Aorta (tissue), 5 donors: ENCODE measurements at regions of chr6 and their contacts with region 1.

Region 1: GRCh38 chr6:150813319-150813992 is 52.0 kb upstream of the MTHFD1L start:
- DNase-seq: no peak
- ATAC-seq: no peak
- H3K4me3 ChIP-seq: no peak overlapping the region
- H3K27ac ChIP-seq: no peak overlapping the region
- H3K4me1 ChIP-seq: no peaks in the 10 kb centered on the region
- H3K27me3 ChIP-seq: no peaks in the 10 kb centered on the region

Region 2: GRCh38 chr6:150079604-150080003 is 733.9 kb before region 1 on chr6:
- intact Hi-C with region 1: loop called (anchors 5 to 10 kb)
- DNase-seq: no peak
- ATAC-seq: no peak
- H3K4me3 ChIP-seq: no peak overlapping the region
- H3K27ac ChIP-seq: no peak overlapping the region
- H3K4me1 ChIP-seq: no peaks in the 10 kb centered on the region
- H3K27me3 ChIP-seq: peaks cover 0 to 1% of the 10 kb centered on the region in 2 donors

Region 3: GRCh38 chr6:150417899-150418826 is 395.3 kb before region 1 on chr6:
- intact Hi-C with region 1: loop called (anchors 1 to 2 kb)
- DNase-seq: no peak
- ATAC-seq: peak; percentile 90
- H3K4me3 ChIP-seq: peak overlapping the region; percentile 51 to 60
- H3K27ac ChIP-seq: no peak overlapping the region
- H3K4me1 ChIP-seq: no peaks in the 10 kb centered on the region
- H3K27me3 ChIP-seq: no peaks in the 10 kb centered on the region

Region 4: DNA sequence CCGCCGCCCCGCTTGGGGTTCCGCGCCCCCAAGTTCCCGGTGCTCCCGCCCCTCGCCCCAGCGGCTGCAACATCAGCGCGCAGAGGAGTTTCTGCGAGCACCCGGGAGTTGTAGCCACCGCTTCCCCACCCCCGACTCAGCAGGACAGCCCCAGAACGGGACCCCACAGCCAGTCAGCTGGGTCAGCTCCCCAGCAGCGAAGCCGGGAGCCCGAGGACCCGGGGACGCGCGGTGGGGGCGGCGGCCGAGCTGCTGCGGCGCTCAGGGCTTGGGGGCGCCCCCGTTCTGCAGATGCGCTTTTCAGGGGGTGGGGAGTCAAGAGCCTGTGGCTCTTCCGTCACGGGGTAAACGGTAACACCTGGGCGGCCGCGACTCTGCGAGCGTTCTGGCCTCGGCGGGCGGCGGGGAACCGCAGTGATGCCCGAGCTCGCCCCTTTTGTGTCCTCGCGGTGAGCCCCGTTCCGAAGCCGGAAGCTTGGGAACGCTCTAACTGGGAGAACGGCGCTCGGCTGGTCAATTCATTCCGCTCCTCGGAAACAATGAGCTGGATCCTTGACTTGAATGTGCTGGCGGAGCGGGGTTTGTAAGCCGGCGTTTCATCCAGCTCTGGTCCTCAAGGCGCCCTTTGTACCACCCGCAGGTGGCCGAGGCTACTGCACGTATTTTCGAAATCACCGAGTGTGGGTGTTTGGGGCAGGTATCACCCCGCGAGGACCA is 213.0 kb before region 1 on chr6:
- intact Hi-C with region 1: loop called in 1 of 2 experiments (anchors 10 kb)
- DNase-seq: peak; percentile 73 to 86
- ATAC-seq: peak; percentile 81
- H3K4me3 ChIP-seq: peak overlapping the region; percentile 60 to 61
- H3K27ac ChIP-seq: no peak overlapping the region
- H3K4me1 ChIP-seq: no peaks in the 10 kb centered on the region
- H3K27me3 ChIP-seq: no peaks in the 10 kb centered on the region

Region 5: GRCh38 chr6:150876598-150876997 is 63.1 kb after region 1 on chr6:
- intact Hi-C with region 1: loop called (anchors 5 kb)
- DNase-seq: peak; percentile 79
- ATAC-seq: peak; percentile 87
- H3K4me3 ChIP-seq: no peak overlapping the region
- H3K27ac ChIP-seq: peak overlapping the region in 1 of 2 donors; percentile 91
- H3K4me1 ChIP-seq: peaks cover 2 to 3% of the 10 kb centered on the region in 2 donors
- H3K27me3 ChIP-seq: no peaks in the 10 kb centered on the region